Sigmoid colon (tissue), 7 donors: ENCODE measurements at regions of chr7 and their contacts with region 1.

Region 1: GRCh38 chr7:80224415-80224814 is 89.8 kb downstream of the GNAI1 start:
- DNase-seq: no peak
- H3K4me3 ChIP-seq: no peak overlapping the region
- H3K27ac ChIP-seq: no peak overlapping the region
- H3K4me1 ChIP-seq: peaks cover 0 to 5% (median 0%) of the 10 kb centered on the region in 4 donors
- H3K27me3 ChIP-seq: no peaks in the 10 kb centered on the region
- CTCF ChIP-seq: no peak
- EP300 ChIP-seq: no peak
- POLR2A ChIP-seq: no peak

Region 2: GRCh38 chr7:80277434-80278427 is 53.3 kb after region 1 on chr7:
- intact Hi-C with region 1: loop called (anchors 5 kb)
- DNase-seq: no peak
- H3K4me3 ChIP-seq: no peak overlapping the region
- H3K27ac ChIP-seq: peak overlapping the region; percentile 20 to 67 (median 52)
- H3K4me1 ChIP-seq: peaks cover 0 to 38% (median 30%) of the 10 kb centered on the region in 4 donors
- H3K27me3 ChIP-seq: no peaks in the 10 kb centered on the region
- CTCF ChIP-seq: no peak
- EP300 ChIP-seq: no peak
- POLR2A ChIP-seq: no peak